ENCODE measurements at regions of chr13 and their contacts with region 1.

Region 1: DNA sequence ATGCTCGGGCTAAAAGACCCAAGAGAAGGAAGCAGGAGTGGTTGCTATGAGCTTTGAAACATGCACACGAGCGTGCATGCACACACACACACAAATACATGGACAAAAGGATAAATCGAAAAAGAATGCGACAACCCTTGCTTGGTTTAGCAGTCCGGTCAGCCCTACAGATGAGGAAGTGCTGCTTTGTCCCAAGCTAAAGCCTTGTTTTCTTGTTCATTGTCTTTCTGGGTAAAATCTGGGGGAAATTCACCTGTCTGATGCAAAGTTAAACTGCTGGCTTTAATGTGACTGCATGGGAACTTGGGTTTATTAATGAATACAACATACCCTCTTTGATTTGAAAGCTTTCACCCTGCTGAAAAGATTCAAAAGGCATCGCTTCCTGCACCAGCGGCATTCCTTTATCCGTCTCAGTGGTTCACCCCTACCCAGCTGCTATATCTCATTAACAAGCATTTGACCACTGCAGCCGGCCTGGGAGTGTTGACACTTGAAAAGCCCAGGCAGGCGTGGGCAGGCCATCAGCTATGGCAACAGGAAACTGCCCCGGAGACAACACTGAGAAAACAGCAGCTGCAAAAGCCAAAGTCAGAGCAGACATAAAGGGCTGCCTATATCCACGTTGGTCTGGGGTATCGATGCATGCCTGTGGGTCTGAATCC is 301.7 kb downstream of the NDFIP2 start:
- DNase-seq: peak; percentile 93
- H3K4me3 ChIP-seq: no peak overlapping the region
- H3K27ac ChIP-seq: peak overlapping the region; percentile 19
- H3K4me1 ChIP-seq: peaks cover 16% of the 10 kb centered on the region
- H3K27me3 ChIP-seq: no peaks in the 10 kb centered on the region
- CTCF ChIP-seq: no peak
- POLR2A ChIP-seq: no peak

Region 2: DNA sequence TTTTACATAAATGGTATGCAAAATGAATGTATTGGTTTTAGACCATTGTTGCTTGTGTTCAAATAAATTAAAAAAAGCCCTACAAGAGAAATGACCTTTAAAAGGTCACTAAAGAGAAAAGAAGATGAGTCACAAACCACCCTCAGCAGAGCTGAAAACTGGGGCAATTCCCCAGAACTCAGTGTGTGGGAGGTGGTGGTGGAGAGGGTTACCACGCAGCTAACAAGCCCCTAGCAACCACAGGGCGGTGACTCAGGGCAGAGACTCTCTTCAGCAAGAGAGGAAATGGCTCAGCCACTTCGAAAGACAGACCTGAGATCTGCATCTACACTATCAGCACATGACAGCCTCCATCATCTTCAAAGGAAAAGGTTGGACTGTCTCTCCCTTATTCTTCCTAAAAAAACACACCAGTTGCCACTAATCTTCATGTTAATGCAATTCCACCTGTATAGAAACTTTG is 331.1 kb before region 1 on chr13:
- CTCF ChIA-PET with region 1: no interaction called
- POLR2A ChIA-PET with region 1: no interaction called
- dilution Hi-C with region 1: no loop called
- intact Hi-C with region 1: no loop called
- DNase-seq: peak; percentile 65
- H3K4me3 ChIP-seq: no peak overlapping the region
- H3K27ac ChIP-seq: no peak overlapping the region
- H3K4me1 ChIP-seq: peaks cover 14% of the 10 kb centered on the region
- H3K27me3 ChIP-seq: no peaks in the 10 kb centered on the region
- CTCF ChIP-seq: no peak
- POLR2A ChIP-seq: no peak

Region 3: DNA sequence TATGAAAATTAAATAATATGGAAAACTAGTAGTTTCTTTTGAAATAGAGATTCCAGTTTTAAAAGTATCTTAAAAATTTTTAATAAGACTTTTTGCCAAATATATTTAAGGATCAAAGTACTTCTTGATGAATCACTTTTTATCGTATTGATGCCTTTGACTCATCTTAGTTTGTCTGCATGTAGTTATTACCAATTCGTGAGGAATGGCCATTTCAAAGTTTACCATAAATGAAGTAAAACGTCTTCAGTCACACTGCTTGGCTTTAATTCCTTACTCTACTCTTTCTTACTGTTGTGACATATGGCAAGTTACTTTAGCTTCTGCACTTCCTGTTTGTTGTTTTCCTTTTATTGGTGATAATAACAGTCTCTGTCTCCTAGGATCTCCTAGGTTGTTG is 263.4 kb before region 1 on chr13:
- CTCF ChIA-PET with region 1: no interaction called
- POLR2A ChIA-PET with region 1: no interaction called
- dilution Hi-C with region 1: no loop called
- intact Hi-C with region 1: no loop called
- DNase-seq: no peak
- H3K4me3 ChIP-seq: no peak overlapping the region
- H3K27ac ChIP-seq: no peak overlapping the region
- H3K4me1 ChIP-seq: peaks cover 6% of the 10 kb centered on the region
- H3K27me3 ChIP-seq: no peaks in the 10 kb centered on the region
- CTCF ChIP-seq: no peak
- POLR2A ChIP-seq: no peak

Region 4: GRCh38 chr13:79621449-79621848 is 161.2 kb before region 1 on chr13:
- CTCF ChIA-PET with region 1: no interaction called
- POLR2A ChIA-PET with region 1: no interaction called
- dilution Hi-C with region 1: no loop called
- intact Hi-C with region 1: no loop called
- DNase-seq: no peak
- H3K4me3 ChIP-seq: no peak overlapping the region
- H3K27ac ChIP-seq: no peak overlapping the region
- H3K4me1 ChIP-seq: no peaks in the 10 kb centered on the region
- H3K27me3 ChIP-seq: peaks cover 5 to 6% of the 10 kb centered on the region in 2 experiments
- CTCF ChIP-seq: no peak
- POLR2A ChIP-seq: no peak

Region 5: GRCh38 chr13:79647538-79647937 is 135.1 kb before region 1 on chr13:
- CTCF ChIA-PET with region 1: no interaction called
- POLR2A ChIA-PET with region 1: no interaction called
- dilution Hi-C with region 1: no loop called
- intact Hi-C with region 1: loop called (anchors 1 kb)
- DNase-seq: peak; percentile 94
- H3K4me3 ChIP-seq: no peak overlapping the region
- H3K27ac ChIP-seq: peak overlapping the region; percentile 64
- H3K4me1 ChIP-seq: peaks cover 10% of the 10 kb centered on the region
- H3K27me3 ChIP-seq: no peaks in the 10 kb centered on the region
- CTCF ChIP-seq: no peak
- POLR2A ChIP-seq: no peak

Region 6: DNA sequence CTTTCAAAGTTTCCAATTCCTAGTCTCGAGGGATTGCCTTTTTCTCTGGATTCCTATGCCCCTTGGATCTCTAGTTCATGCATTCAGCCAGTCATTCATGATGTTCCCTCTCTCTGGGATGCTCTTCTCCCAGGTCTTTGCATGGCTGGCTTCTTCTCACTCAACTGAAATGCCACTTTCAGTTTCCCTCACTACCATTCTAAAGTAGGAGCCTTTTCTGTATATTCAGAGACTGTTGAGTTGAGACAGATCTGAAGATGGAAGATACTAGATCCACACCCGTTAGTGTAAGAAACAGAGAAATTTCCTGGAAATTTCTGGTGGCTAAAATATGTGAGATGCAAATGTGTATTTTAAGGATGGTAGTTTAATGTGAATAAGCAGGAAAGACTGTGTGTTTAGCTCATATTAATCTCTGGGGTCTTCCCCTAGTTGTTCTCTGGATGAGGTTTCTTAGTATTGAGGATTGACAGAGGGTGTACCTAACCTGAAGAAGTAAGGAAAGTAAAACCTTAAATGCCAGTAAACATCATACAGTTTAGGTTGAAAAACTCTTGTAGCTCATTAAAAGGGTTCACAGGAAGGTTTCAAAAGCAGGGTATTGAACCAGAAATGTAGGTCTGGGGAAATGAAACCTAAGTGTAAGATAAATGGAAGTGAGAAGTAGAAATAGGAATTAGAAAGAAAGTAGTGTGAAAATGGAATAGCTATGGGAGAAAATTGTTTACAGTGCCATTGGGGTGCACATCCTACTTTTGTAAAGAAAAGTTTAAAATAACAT is 29.6 kb after region 1 on chr13:
- CTCF ChIA-PET with region 1: no interaction called
- POLR2A ChIA-PET with region 1: no interaction called
- dilution Hi-C with region 1: no loop called
- intact Hi-C with region 1: loop called (anchors 2 kb)
- DNase-seq: no peak
- H3K4me3 ChIP-seq: no peak overlapping the region
- H3K27ac ChIP-seq: no peak overlapping the region
- H3K4me1 ChIP-seq: peaks cover 27% of the 10 kb centered on the region
- H3K27me3 ChIP-seq: no peaks in the 10 kb centered on the region
- CTCF ChIP-seq: no peak
- POLR2A ChIP-seq: no peak

Region 7: GRCh38 chr13:80591976-80592740 is 809.5 kb after region 1 on chr13:
- CTCF ChIA-PET with region 1: no interaction called
- POLR2A ChIA-PET with region 1: no interaction called
- dilution Hi-C with region 1: no loop called
- intact Hi-C with region 1: no loop called
- DNase-seq: no peak
- H3K4me3 ChIP-seq: no peak overlapping the region
- H3K27ac ChIP-seq: no peak overlapping the region
- H3K4me1 ChIP-seq: no peaks in the 10 kb centered on the region
- H3K27me3 ChIP-seq: no peaks in the 10 kb centered on the region
- CTCF ChIP-seq: no peak
- POLR2A ChIP-seq: no peak

Measured in endothelial cell of umbilical vein (primary cell).